ENCODE measurements at regions of chr4 and their contacts with region 1.

Region 1: GRCh38 chr4:6250235-6250983 is 19.2 kb upstream of the WFS1 start:
- DNase-seq: peak; percentile 43
- ATAC-seq: peak; percentile 70
- H3K4me3 Mint-ChIP-seq: peak overlapping the region; percentile 54
- H3K27ac Mint-ChIP-seq: no peak overlapping the region
- H3K4me1 Mint-ChIP-seq: peaks cover 18% of the 10 kb centered on the region
- H3K27me3 Mint-ChIP-seq: peaks cover 6% of the 10 kb centered on the region
- CTCF ChIP-seq: peak; percentile 80

Region 2: DNA sequence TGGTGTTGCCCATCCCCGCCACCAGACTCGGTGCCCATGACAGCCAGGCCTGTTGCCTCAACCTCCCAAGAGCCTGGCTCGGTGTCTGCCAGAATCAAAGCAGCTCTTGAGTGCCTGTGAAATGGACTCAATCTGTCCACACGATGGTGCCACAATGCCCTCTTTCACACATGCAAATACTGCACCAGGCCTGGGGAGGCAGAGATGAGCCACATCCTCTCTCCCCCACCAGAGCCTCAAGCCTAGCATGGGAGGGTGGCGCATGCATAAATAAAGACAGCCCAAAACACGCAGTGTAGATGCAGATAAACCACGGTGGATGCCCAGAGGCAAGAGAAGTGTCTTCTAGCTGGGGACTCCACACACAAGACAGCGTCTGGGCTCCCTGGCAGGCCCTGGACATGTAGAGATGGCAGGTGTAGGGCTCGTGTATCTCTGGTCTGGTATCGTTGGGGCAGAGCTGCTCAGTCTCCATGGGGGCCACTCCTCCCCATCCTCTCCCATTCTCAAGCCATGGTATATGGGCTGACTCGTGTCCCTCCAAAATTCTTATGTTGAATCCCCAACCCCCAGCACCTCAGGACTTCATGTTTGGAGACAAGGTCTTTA is 115.7 kb before region 1 on chr4:
- CTCF ChIA-PET with region 1: interaction called, 11 read pairs
- POLR2A ChIA-PET with region 1: no interaction called
- DNase-seq: no peak
- ATAC-seq: peak; percentile 77
- H3K4me3 Mint-ChIP-seq: no peak overlapping the region
- H3K27ac Mint-ChIP-seq: no peak overlapping the region
- H3K4me1 Mint-ChIP-seq: peaks cover 21% of the 10 kb centered on the region
- H3K27me3 Mint-ChIP-seq: no peaks in the 10 kb centered on the region; the same call in 1 of the 2 replicates
- CTCF ChIP-seq: no peak

Region 3: GRCh38 chr4:6264225-6264540 is 13.8 kb after region 1 on chr4:
- CTCF ChIA-PET with region 1: interaction called, 37 read pairs
- POLR2A ChIA-PET with region 1: no interaction called
- DNase-seq: peak; percentile 61
- ATAC-seq: peak; percentile 77
- H3K4me3 Mint-ChIP-seq: no peak overlapping the region
- H3K27ac Mint-ChIP-seq: no peak overlapping the region
- H3K4me1 Mint-ChIP-seq: peaks cover 25% of the 10 kb centered on the region
- H3K27me3 Mint-ChIP-seq: peaks cover 8% of the 10 kb centered on the region
- CTCF ChIP-seq: no peak

Region 4: DNA sequence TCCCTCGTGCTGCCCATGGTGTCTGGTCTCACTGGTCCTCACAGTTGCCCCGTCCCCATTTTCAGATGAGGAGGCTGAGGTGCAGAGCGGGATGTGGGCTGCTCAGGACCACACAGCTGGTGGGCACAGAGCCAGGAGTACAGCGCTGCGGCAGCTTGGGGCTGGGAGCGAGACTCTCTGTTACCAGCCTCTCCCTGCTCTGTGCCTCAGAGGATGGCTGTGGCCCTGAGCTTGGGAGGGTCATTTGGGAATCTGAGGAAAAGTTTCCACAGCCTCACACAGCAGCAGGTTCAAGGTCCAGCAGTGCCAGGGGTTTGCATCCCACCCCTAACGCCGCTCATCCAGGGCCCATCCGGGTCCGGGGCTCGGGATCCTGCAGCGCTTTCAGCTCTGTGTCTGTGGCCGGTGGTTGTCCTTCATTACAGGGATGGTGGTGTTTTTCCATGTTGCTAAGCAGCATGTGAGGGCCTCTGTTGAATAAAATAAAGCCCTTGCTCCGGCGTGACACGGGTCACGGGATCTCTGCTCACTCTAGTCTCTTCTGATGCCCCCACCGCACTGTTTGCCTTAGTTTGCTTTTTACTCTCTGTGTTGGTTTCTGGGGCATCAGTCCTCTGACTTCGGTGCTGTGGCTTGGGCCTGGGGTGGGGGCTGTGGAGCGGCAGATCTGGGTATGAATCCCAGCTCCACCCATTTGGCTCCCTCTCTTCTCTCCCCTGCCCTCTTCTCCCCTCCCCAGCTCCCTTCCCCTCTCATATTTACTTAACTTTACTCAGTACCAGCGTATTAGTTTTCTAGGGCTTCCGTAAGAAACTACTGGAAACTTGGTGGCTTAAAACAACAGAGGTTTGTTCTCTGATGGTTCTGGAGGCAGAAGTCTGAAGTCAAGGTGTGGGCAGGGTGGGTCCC is 25.7 kb after region 1 on chr4:
- CTCF ChIA-PET with region 1: interaction called, 16 read pairs
- POLR2A ChIA-PET with region 1: no interaction called
- DNase-seq: no peak
- ATAC-seq: no peak
- H3K4me3 Mint-ChIP-seq: no peak overlapping the region
- H3K27ac Mint-ChIP-seq: no peak overlapping the region
- H3K4me1 Mint-ChIP-seq: peaks cover 31% of the 10 kb centered on the region
- H3K27me3 Mint-ChIP-seq: no peaks in the 10 kb centered on the region
- CTCF ChIP-seq: no peak

Region 5: GRCh38 chr4:6308899-6309643 is 58.7 kb after region 1 on chr4:
- CTCF ChIA-PET with region 1: interaction called, 15 read pairs
- POLR2A ChIA-PET with region 1: no interaction called
- DNase-seq: peak; percentile 71
- ATAC-seq: peak; percentile 79
- H3K4me3 Mint-ChIP-seq: peak overlapping the region; percentile 69
- H3K27ac Mint-ChIP-seq: no peak overlapping the region
- H3K4me1 Mint-ChIP-seq: no peaks in the 10 kb centered on the region; the same call in 1 of the 2 replicates
- H3K27me3 Mint-ChIP-seq: peaks cover 31% of the 10 kb centered on the region
- CTCF ChIP-seq: no peak

Region 6: GRCh38 chr4:6396696-6397236 is 146.4 kb after region 1 on chr4:
- CTCF ChIA-PET with region 1: no interaction called
- POLR2A ChIA-PET with region 1: no interaction called
- DNase-seq: no peak
- ATAC-seq: no peak
- H3K4me3 Mint-ChIP-seq: no peak overlapping the region
- H3K27ac Mint-ChIP-seq: peak overlapping the region; percentile 79; the same call in 1 of the 2 replicates
- H3K4me1 Mint-ChIP-seq: peaks cover 11% of the 10 kb centered on the region
- H3K27me3 Mint-ChIP-seq: no peaks in the 10 kb centered on the region; the same call in 1 of the 2 replicates
- CTCF ChIP-seq: no peak